Dendritic cell treated with granulocyte-macrophage colony-stimulating factor and Interleukin-4, amounts not matched to agents 40 ng/mL and 50 ng/mL, for 4 days (primary cell): ENCODE measurements at regions of chr11 and their contacts with region 1.

Region 1: GRCh38 chr11:75445315-75445953 is 12.4 kb upstream of the KLHL35 start:
- H3K4me3 Mint-ChIP-seq: no peak overlapping the region
- H3K27ac Mint-ChIP-seq: no peak overlapping the region
- H3K4me1 Mint-ChIP-seq: no peaks in the 10 kb centered on the region
- H3K27me3 Mint-ChIP-seq: no peaks in the 10 kb centered on the region

Region 2: DNA sequence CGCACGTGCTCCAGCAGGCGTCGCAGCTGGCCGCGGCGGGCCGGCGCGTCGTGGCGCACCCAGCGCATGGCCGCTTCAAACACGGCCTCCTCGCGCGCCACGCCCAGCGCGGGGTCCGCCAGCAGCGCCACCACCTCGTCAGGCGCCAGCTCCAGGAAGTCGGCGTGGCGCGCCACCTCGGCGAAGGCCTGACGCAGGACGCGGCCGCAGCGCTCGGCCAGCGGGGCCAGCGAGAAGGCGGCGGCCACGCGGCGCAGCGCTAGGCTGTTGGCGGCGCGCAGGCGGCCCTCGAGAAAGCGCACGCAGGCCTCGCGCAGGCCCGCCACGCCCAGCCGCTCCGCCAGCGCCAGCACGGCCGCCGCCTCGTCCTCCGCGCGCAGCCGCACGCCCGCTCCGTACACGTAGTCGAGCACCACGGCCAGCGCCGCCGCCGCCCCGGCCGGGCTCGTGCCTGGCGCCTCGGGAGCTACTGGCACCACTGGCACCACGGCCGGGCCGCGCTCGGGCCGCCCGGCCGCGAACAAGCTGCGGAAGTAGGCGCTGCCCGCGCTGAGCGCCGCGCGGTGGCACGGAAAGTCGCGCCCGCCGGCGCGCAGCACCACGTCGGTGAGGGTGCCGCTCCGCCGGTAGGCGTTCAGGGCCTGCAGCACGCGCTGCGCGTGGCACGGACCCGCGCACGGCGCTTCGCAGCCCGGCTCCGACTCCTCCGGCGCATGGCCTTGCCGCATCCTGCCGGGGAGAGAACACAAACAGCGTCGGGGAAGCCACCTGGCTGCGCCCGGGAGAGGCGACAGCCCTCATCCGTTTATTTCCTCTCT is 15.3 kb before region 1 on chr11:
- intact Hi-C with region 1: no loop called
- H3K4me3 Mint-ChIP-seq: peak overlapping the region; percentile 76
- H3K27ac Mint-ChIP-seq: peak overlapping the region; percentile 76
- H3K4me1 Mint-ChIP-seq: peaks cover 37% of the 10 kb centered on the region
- H3K27me3 Mint-ChIP-seq: peaks cover 64% of the 10 kb centered on the region

Region 3: GRCh38 chr11:75532200-75533048 is 87.0 kb after region 1 on chr11:
- intact Hi-C with region 1: loop called (anchors 1 kb)
- H3K4me3 Mint-ChIP-seq: no peak overlapping the region
- H3K27ac Mint-ChIP-seq: no peak overlapping the region
- H3K4me1 Mint-ChIP-seq: peaks cover 19% of the 10 kb centered on the region
- H3K27me3 Mint-ChIP-seq: peaks cover 29% of the 10 kb centered on the region